H1 (cell line): ENCODE measurements at regions of chr6 and their contacts with region 1.

Region 1: GRCh38 chr6:104682722-104683643 is 176.7 kb downstream of the HACE1 start:
- DNase-seq: peak; percentile 51 to 89
- H3K4me3 ChIP-seq: no peak overlapping the region
- H3K27ac ChIP-seq: no peak overlapping the region
- H3K4me1 ChIP-seq: no peaks in the 10 kb centered on the region
- H3K27me3 ChIP-seq: peaks cover 0 to 1% (median 0%) of the 10 kb centered on the region in 4 experiments; a peak in 1 of 7 replicates
- CTCF ChIP-seq: peak; percentile 87 to 94 (median 92)
- EP300 ChIP-seq: peak in 1 of 2 experiments; percentile 38; a peak in 1 of 3 replicates
- POLR2A ChIP-seq: no peak
- RAD21 ChIP-seq: peak; percentile 94 to 96

Region 2: GRCh38 chr6:104591573-104592334 is 91.2 kb before region 1 on chr6:
- CTCF ChIA-PET with region 1: no interaction called
- POLR2A ChIA-PET with region 1: no interaction called
- DNase-seq: no peak
- H3K4me3 ChIP-seq: no peak overlapping the region
- H3K27ac ChIP-seq: no peak overlapping the region
- H3K4me1 ChIP-seq: no peaks in the 10 kb centered on the region
- H3K27me3 ChIP-seq: peaks cover 0 to 1% (median 0%) of the 10 kb centered on the region in 4 experiments; a peak in 1 of 7 replicates
- CTCF ChIP-seq: no peak
- EP300 ChIP-seq: no peak
- POLR2A ChIP-seq: no peak
- RAD21 ChIP-seq: no peak

Region 3: GRCh38 chr6:104613416-104614001 is 69.5 kb before region 1 on chr6:
- CTCF ChIA-PET with region 1: no interaction called
- POLR2A ChIA-PET with region 1: no interaction called
- DNase-seq: no peak
- H3K4me3 ChIP-seq: no peak overlapping the region
- H3K27ac ChIP-seq: no peak overlapping the region
- H3K4me1 ChIP-seq: 0 out of 7 replicates have a peak, but pooled peaks cover 0 to 2% (median 0%) of the 10 kb centered on the region in 4 experiments
- H3K27me3 ChIP-seq: no peaks in the 10 kb centered on the region
- CTCF ChIP-seq: no peak
- EP300 ChIP-seq: no peak
- POLR2A ChIP-seq: no peak
- RAD21 ChIP-seq: no peak

Region 4: DNA sequence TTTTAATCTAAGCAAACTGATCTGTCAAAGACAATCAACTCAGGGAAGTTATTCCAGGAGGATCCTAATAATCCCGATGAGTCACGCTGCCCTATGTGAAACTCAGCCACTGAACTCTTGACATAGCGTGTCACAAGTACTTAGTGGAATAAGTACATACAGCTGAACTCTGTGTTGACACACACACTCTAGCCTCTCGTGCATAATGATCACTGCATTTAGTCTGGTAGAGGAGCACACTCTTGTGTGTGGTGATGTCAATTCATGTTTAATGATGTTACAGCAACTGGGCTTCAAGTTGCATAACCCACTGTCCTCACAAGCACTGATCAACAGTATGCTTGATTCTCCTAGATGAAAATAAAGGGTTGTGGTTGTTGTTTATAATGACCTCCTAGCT is 28.4 kb after region 1 on chr6:
- CTCF ChIA-PET with region 1: no interaction called
- POLR2A ChIA-PET with region 1: no interaction called
- DNase-seq: no peak
- H3K4me3 ChIP-seq: no peak overlapping the region
- H3K27ac ChIP-seq: no peak overlapping the region
- H3K4me1 ChIP-seq: 0 out of 7 replicates have a peak, but pooled peaks cover 0 to 2% (median 0%) of the 10 kb centered on the region in 4 experiments
- H3K27me3 ChIP-seq: no peaks in the 10 kb centered on the region
- CTCF ChIP-seq: no peak
- EP300 ChIP-seq: no peak
- POLR2A ChIP-seq: no peak
- RAD21 ChIP-seq: no peak

Region 5: GRCh38 chr6:104771258-104771832 is 88.4 kb after region 1 on chr6:
- CTCF ChIA-PET with region 1: interaction called, 32 read pairs
- POLR2A ChIA-PET with region 1: no interaction called
- DNase-seq: no peak
- H3K4me3 ChIP-seq: no peak overlapping the region
- H3K27ac ChIP-seq: no peak overlapping the region
- H3K4me1 ChIP-seq: no peaks in the 10 kb centered on the region
- H3K27me3 ChIP-seq: no peaks in the 10 kb centered on the region
- CTCF ChIP-seq: peak in 2 of 3 experiments; percentile 26 to 29; a peak in 2 of 4 replicates
- EP300 ChIP-seq: no peak
- POLR2A ChIP-seq: no peak
- RAD21 ChIP-seq: peak; percentile 48 to 63